ENCODE measurements at regions of chr3 and their contacts with region 1.

Region 1: GRCh38 chr3:39208463-39209055 is 16.2 kb upstream of the XIRP1 start:
- DNase-seq: peak in 1 of 2 donors; percentile 76
- ATAC-seq: peak; percentile 79 to 91 (median 83)
- H3K4me3 ChIP-seq: no peak overlapping the region
- H3K4me3 Mint-ChIP-seq: peak overlapping the region; percentile 25
- H3K27ac ChIP-seq: peak overlapping the region; percentile 39
- H3K27ac Mint-ChIP-seq: peak overlapping the region; percentile 85 to 86
- H3K4me1 ChIP-seq: peaks cover 19% of the 10 kb centered on the region
- H3K4me1 Mint-ChIP-seq: peaks cover 46 to 53% of the 10 kb centered on the region in 2 donors
- H3K27me3 ChIP-seq: no peaks in the 10 kb centered on the region
- H3K27me3 Mint-ChIP-seq: no peaks in the 10 kb centered on the region
- CTCF ChIP-seq: peak; percentile 72

Region 2: DNA sequence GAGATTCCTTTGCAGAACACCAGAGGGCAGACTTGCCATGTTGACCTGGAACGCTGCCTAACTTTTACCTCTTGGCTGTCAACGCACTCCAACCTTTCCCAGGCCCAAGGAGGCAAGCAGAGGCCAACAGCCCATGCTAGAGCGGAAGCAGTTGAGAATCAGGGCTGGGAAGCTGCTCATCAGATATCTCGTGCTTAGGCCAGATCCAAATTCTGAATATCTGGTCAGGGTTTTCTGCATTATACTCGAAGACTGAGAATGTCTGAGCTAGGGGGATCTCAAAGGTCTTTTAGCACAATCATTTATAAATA is 18.6 kb before region 1 on chr3:
- intact Hi-C with region 1: loop called (anchors 2 kb)
- DNase-seq: peak; percentile 61 to 85
- ATAC-seq: peak; percentile 73 to 89 (median 79)
- H3K4me3 ChIP-seq: no peak overlapping the region
- H3K4me3 Mint-ChIP-seq: no peak overlapping the region
- H3K27ac ChIP-seq: no peak overlapping the region
- H3K27ac Mint-ChIP-seq: peak overlapping the region in 1 of 2 donors; percentile 81
- H3K4me1 ChIP-seq: peaks cover 25% of the 10 kb centered on the region
- H3K4me1 Mint-ChIP-seq: peaks cover 20 to 37% of the 10 kb centered on the region in 2 donors
- H3K27me3 ChIP-seq: no peaks in the 10 kb centered on the region
- H3K27me3 Mint-ChIP-seq: no peaks in the 10 kb centered on the region
- CTCF ChIP-seq: peak; percentile 85

Region 3: DNA sequence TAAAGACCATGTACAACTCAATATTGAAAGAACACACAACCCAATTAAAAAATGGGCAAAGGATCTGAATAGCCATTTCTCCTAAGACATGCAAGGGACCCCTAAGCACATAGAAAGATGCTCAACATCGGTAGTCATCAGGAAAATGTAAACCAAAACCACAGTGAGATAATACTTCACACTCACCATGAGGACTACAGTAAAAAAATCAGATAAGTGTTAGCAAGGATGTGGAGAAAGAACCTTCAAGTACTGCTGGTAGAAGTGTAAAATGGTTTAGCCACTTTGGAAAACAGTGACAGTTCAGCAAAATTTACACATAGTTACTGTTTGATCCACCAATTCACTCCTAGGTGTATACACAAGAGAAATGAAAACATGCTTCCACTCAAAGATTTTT is 13.9 kb after region 1 on chr3:
- intact Hi-C with region 1: loop called (anchors 1 kb)
- DNase-seq: peak in 1 of 2 donors; percentile 48
- ATAC-seq: peak; percentile 71 to 88 (median 85)
- H3K4me3 ChIP-seq: no peak overlapping the region
- H3K4me3 Mint-ChIP-seq: peak overlapping the region; percentile 89
- H3K27ac ChIP-seq: peak overlapping the region; percentile 47
- H3K27ac Mint-ChIP-seq: peak overlapping the region; percentile 86 to 89
- H3K4me1 ChIP-seq: peaks cover 32% of the 10 kb centered on the region
- H3K4me1 Mint-ChIP-seq: peaks cover 78 to 84% of the 10 kb centered on the region in 2 donors
- H3K27me3 ChIP-seq: no peaks in the 10 kb centered on the region
- H3K27me3 Mint-ChIP-seq: no peaks in the 10 kb centered on the region
- CTCF ChIP-seq: no peak

Region 4: GRCh38 chr3:39260957-39261356 is 52.4 kb after region 1 on chr3:
- intact Hi-C with region 1: loop called (anchors 1 kb)
- DNase-seq: peak; percentile 62 to 83
- ATAC-seq: peak; percentile 71 to 93 (median 75)
- H3K4me3 ChIP-seq: no peak overlapping the region
- H3K4me3 Mint-ChIP-seq: peak overlapping the region; percentile 84
- H3K27ac ChIP-seq: peak overlapping the region; percentile 90
- H3K27ac Mint-ChIP-seq: peak overlapping the region; percentile 91 to 92
- H3K4me1 ChIP-seq: peaks cover 75% of the 10 kb centered on the region
- H3K4me1 Mint-ChIP-seq: peaks cover 90 to 97% of the 10 kb centered on the region in 2 donors
- H3K27me3 ChIP-seq: no peaks in the 10 kb centered on the region
- H3K27me3 Mint-ChIP-seq: no peaks in the 10 kb centered on the region
- CTCF ChIP-seq: peak; percentile 55

Region 5: GRCh38 chr3:39288300-39288808 is 79.8 kb after region 1 on chr3:
- intact Hi-C with region 1: loop called (anchors 1 kb)
- DNase-seq: peak; percentile 75 to 91
- ATAC-seq: peak; percentile 94 to 98 (median 97)
- H3K4me3 ChIP-seq: no peak overlapping the region
- H3K4me3 Mint-ChIP-seq: no peak overlapping the region
- H3K27ac ChIP-seq: no peak overlapping the region
- H3K27ac Mint-ChIP-seq: peak overlapping the region; percentile 55 to 88
- H3K4me1 ChIP-seq: peaks cover 39% of the 10 kb centered on the region
- H3K4me1 Mint-ChIP-seq: peaks cover 24 to 47% of the 10 kb centered on the region in 2 donors
- H3K27me3 ChIP-seq: no peaks in the 10 kb centered on the region
- H3K27me3 Mint-ChIP-seq: no peaks in the 10 kb centered on the region
- CTCF ChIP-seq: peak; percentile 97